ENCODE measurements at regions of chr12 and their contacts with region 1.

Region 1: GRCh38 chr12:93526786-93527428 is 45.6 kb upstream of the SOCS2 start:
- DNase-seq: peak; percentile 28 to 92
- ATAC-seq: peak; percentile 68 to 78; a peak in 5 of 6 replicates
- H3K4me3 ChIP-seq: no peak overlapping the region
- H3K27ac ChIP-seq: peak overlapping the region; percentile 56 to 74
- H3K4me1 ChIP-seq: peaks cover 40% of the 10 kb centered on the region
- CTCF ChIP-seq: no peak
- EP300 ChIP-seq: peak in 1 of 2 experiments; percentile 34; a peak in 1 of 5 replicates
- POLR2A ChIP-seq: no peak
- RAD21 ChIP-seq: 0 out of 5 replicates have a peak, but pooled peaks of 1 of the 2 experiments have one; percentile 7

Region 2: DNA sequence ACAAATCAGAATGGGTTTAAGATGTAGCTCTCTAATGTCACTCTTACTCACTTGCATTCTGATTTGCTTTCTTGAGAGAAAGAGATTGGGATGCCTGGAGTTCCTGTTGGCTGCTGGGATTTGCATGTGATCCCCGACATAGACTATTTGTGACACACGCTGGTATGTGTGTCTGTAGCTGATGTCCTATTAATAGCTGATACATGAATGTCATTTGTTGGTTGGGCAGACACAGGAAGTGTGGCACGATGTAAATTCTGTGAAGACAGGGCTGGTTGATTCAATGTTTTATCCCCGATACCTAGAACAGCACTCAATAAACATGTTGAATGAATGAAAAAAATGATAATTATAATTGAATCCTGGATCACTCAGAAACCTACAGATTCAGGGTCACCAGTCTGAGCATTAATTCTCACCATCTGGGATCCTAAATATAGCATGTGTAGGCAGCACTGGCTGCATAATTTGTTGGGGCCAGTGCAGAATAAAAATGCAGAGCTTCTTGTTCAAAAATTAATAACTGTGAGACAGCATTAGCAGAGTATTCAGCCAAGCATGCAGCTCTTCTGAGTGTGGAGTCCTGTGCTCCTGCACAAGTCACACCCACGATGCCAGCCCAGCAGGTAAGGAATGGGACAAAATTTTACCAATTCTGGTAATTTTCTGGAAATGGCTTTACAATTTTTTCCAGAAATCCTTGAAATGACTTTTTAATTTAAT is 10.0 kb after region 1 on chr12:
- CTCF ChIA-PET with region 1: interaction called, 13 read pairs
- POLR2A ChIA-PET with region 1: no interaction called
- DNase-seq: no peak
- ATAC-seq: no peak
- H3K4me3 ChIP-seq: no peak overlapping the region
- H3K27ac ChIP-seq: no peak overlapping the region
- H3K4me1 ChIP-seq: no peaks in the 10 kb centered on the region
- CTCF ChIP-seq: no peak
- EP300 ChIP-seq: no peak
- POLR2A ChIP-seq: no peak
- RAD21 ChIP-seq: no peak

Region 3: DNA sequence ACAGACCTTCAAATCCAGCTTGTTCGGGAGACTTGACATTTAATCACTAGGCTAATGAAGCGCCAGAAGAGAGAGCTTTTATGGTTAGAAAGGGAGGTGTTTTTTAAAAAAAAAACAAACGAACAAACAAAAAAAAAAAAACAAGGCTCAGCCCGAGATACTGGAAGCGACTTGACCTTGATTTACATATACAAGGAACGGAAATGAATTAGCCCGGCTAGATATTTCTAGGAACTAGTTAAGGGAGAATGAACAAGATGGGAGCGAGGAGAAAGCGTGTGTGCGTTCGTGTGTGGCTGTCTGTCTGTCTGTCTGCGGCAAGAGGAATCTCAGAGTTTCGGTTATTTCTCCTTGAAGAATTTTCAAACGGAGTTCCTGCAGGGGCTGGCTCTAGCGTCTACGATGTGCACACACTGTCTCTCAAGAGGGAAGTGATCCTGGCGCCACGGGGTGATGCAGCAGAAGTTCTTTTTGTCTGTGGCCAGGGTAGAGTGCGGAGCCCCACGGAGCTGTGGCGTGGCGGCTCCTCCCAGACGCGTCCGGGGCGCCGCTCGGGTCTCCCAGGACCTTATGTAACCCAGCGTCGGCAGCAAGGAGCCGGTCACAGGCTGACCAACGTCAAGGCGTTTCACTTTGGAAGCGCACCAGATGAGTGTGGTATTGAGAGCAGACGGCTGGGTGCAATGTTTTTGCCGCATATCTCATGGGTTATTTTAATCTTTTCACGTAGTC is 64.4 kb after region 1 on chr12:
- CTCF ChIA-PET with region 1: no interaction called
- POLR2A ChIA-PET with region 1: interaction called, 11 read pairs
- DNase-seq: peak; percentile 80 to 82
- ATAC-seq: peak; percentile 94 to 97
- H3K4me3 ChIP-seq: peak overlapping the region; percentile 56
- H3K27ac ChIP-seq: peak overlapping the region; percentile 70 to 86
- H3K4me1 ChIP-seq: no peaks in the 10 kb centered on the region; the same call in 2 of the 3 replicates
- CTCF ChIP-seq: no peak
- EP300 ChIP-seq: no peak
- POLR2A ChIP-seq: peak; percentile 51
- RAD21 ChIP-seq: peak in 1 of 2 experiments; percentile 34; a peak in 1 of 5 replicates

Measured in A549 (cell line).